Right ventricle myocardium inferior (tissue), 1 donor: ENCODE measurements at regions of chr20 and their contacts with region 1.

Region 1: GRCh38 chr20:5141615-5142014 is 14.8 kb downstream of the CDS2 start:
- DNase-seq: no peak
- ATAC-seq: peak; percentile 24

Region 2: DNA sequence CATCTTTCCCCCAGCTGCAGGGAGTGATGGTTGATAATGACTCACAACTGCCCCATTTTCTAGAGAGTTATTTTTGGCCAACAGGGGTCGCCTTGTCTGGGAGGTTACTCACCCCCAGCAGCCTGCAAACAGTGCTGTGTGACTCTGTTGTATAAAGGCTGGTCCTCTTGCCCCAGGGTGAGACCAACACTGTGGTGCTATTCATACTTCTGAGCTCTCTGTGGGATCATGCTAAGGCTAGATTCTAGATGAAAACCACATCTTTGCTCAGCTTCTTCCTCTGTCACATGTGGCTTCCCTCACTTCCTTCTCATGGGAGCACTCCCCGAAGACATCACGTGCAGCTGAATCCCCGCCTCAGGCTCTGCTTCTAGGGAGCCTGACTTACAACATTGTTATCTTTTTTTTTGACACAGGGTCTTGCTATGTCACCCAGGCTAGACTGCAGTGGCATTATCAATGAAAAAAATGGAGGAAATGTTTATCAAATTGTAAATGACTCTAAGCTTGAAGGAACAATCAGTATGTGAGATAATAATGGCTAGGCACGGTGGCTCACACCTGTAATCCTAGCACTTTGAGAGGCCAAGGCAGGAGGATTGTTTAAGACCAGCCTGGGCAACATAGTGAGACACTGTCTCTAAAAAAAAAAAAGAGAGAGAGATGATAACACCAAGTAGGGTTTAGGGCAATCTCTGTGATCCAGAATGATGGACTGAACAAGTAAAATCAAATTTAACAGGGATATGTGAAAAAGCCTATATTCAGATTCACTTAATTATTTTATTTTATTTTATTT is 84.6 kb before region 1 on chr20:
- intact Hi-C with region 1: no loop called
- DNase-seq: peak; percentile 69
- ATAC-seq: peak; percentile 64

Region 3: DNA sequence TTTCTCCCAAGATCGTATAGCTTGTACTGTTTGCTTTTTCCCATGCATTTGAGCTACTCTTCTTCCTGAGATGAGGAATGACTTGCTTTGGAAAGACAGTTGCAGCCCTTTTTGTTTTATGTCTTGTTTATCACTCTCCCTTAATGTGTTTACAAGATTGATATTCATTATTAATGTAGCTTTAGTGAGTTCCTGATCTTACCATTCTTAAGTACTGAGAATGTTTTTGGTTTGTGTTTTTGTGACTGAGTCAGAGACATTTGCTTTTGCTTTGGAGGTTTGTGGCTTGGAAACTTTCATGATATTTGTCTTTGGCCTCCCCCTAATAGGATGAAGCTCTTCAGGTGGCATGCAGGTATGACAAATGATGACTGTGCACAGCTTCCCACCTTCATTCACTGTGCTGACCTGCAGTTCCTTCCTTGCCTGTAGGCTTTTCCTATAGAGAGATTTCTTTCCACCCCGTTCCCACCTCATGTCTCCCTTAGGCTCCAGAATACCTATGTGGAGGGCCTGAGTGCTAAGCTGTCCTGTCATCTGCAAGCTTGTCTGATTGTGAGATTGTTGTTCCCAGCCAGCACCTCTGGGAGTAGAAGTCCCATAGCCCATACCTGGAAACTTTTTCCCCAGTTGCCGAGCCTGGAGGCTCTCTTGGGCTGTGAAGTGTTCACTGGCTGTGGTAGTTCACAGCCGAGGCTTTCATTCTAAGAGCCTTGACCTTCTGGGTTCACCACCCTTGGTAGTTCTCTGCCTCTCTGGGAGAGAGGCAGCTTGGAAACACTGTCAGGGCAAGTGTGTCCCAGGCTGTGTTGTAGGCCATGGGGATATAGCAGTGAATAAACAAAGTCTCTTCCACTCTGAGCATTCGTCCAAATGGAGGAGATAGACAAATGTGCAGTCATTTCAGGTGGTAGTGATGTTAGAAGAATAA is 12.3 kb after region 1 on chr20:
- intact Hi-C with region 1: loop called (anchors 2 kb)
- DNase-seq: no peak
- ATAC-seq: no peak

Region 4: GRCh38 chr20:5290596-5290995 is 149.0 kb after region 1 on chr20:
- intact Hi-C with region 1: no loop called
- DNase-seq: no peak
- ATAC-seq: no peak